ENCODE measurements at regions of chr9 and their contacts with region 1.

Region 1: GRCh38 chr9:100111235-100111634 is 12.2 kb downstream of the INVS start:
- DNase-seq: peak; percentile 87 to 92
- ATAC-seq: peak; percentile 99 to 100
- H3K4me3 ChIP-seq: no peak overlapping the region
- H3K27ac ChIP-seq: peak overlapping the region; percentile 60 to 72 (median 66)
- H3K4me1 ChIP-seq: peaks cover 11 to 37% of the 10 kb centered on the region in 2 donors
- H3K27me3 ChIP-seq: no peaks in the 10 kb centered on the region
- CTCF ChIP-seq: no peak
- POLR2A ChIP-seq: no peak

Region 2: DNA sequence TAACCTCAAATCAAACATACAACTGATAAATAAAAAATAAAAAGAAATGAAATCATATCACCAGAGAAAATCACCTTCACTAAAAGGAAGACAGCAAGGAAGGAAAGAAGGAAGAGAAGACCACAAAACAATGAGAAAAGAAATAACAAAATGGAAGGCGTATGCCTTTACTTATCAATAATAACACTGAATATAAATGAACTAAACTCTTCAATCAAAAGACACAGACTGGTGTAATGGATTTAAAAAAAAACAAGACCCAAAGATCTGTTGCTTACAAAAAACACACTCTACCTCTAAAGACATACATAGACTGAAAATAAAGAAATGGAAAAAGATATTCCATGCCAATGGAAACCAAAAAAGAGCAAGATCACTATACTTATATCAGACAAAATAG is 72.8 kb before region 1 on chr9:
- in situ Hi-C with region 1: no loop called
- intact Hi-C with region 1: no loop called
- DNase-seq: no peak
- ATAC-seq: no peak
- H3K4me3 ChIP-seq: no peak overlapping the region
- H3K27ac ChIP-seq: no peak overlapping the region
- H3K4me1 ChIP-seq: peaks cover 0 to 14% of the 10 kb centered on the region in 2 donors
- H3K27me3 ChIP-seq: no peaks in the 10 kb centered on the region
- CTCF ChIP-seq: no peak
- POLR2A ChIP-seq: no peak

Region 3: GRCh38 chr9:100098887-100099721 is 12.1 kb before region 1 on chr9 and contains the starts of genes ERP44 and INVS:
- in situ Hi-C with region 1: no loop called
- intact Hi-C with region 1: loop called (anchors 1 kb)
- DNase-seq: peak; percentile 99 to 100
- ATAC-seq: peak; percentile 95
- H3K4me3 ChIP-seq: peak within 1 kb of the TSS; percentile 87 to 98 (median 98)
- H3K27ac ChIP-seq: peak within 1 kb of the TSS; percentile 90 to 99 (median 95)
- H3K4me1 ChIP-seq: peaks cover 31 to 38% of the 10 kb centered on the region in 2 donors
- H3K27me3 ChIP-seq: no peaks in the 10 kb centered on the region
- CTCF ChIP-seq: no peak
- POLR2A ChIP-seq: peak; percentile 92 to 94
- total RNA-seq, gene ERP44: 7.0 to 10.8 (median 9.7) TPM
- total RNA-seq, gene INVS: 5.5 to 13.9 (median 6.7) TPM

Region 4: GRCh38 chr9:100167915-100168654 is 56.9 kb after region 1 on chr9:
- in situ Hi-C with region 1: no loop called
- intact Hi-C with region 1: no loop called
- DNase-seq: no peak
- ATAC-seq: no peak
- H3K4me3 ChIP-seq: no peak overlapping the region
- H3K27ac ChIP-seq: no peak overlapping the region
- H3K4me1 ChIP-seq: no peaks in the 10 kb centered on the region
- H3K27me3 ChIP-seq: no peaks in the 10 kb centered on the region
- CTCF ChIP-seq: no peak
- POLR2A ChIP-seq: no peak

Region 5: GRCh38 chr9:100590481-100590880 is 479.2 kb after region 1 on chr9:
- in situ Hi-C with region 1: no loop called
- intact Hi-C with region 1: loop called (anchors 5 kb)
- DNase-seq: no peak
- ATAC-seq: no peak
- H3K4me3 ChIP-seq: no peak overlapping the region
- H3K27ac ChIP-seq: peak overlapping the region in 3 of 4 donors; percentile 47 to 62 (median 57)
- H3K4me1 ChIP-seq: peaks cover 9 to 15% of the 10 kb centered on the region in 2 donors
- H3K27me3 ChIP-seq: no peaks in the 10 kb centered on the region
- CTCF ChIP-seq: no peak
- POLR2A ChIP-seq: no peak